B cell (primary cell): ENCODE measurements at regions of chr19 and their contacts with region 1.

Region 1: GRCh38 chr19:2962045-2962561 is 15.3 kb upstream of the TLE6 start:
- DNase-seq: peak; percentile 91
- ATAC-seq: peak; percentile 73
- H3K4me3 ChIP-seq: peak overlapping the region in 3 of 5 experiments; percentile 2 to 33 (median 9)
- H3K4me3 Mint-ChIP-seq: peak overlapping the region; percentile 2
- H3K27ac ChIP-seq: no peak overlapping the region
- H3K27ac Mint-ChIP-seq: peak overlapping the region; percentile 71
- H3K4me1 ChIP-seq: peaks cover 13 to 18% of the 10 kb centered on the region in 2 donors
- H3K4me1 Mint-ChIP-seq: peaks cover 14% of the 10 kb centered on the region
- H3K27me3 ChIP-seq: no peaks in the 10 kb centered on the region
- H3K27me3 Mint-ChIP-seq: no peaks in the 10 kb centered on the region
- CTCF ChIP-seq: peak; percentile 82

Region 2: DNA sequence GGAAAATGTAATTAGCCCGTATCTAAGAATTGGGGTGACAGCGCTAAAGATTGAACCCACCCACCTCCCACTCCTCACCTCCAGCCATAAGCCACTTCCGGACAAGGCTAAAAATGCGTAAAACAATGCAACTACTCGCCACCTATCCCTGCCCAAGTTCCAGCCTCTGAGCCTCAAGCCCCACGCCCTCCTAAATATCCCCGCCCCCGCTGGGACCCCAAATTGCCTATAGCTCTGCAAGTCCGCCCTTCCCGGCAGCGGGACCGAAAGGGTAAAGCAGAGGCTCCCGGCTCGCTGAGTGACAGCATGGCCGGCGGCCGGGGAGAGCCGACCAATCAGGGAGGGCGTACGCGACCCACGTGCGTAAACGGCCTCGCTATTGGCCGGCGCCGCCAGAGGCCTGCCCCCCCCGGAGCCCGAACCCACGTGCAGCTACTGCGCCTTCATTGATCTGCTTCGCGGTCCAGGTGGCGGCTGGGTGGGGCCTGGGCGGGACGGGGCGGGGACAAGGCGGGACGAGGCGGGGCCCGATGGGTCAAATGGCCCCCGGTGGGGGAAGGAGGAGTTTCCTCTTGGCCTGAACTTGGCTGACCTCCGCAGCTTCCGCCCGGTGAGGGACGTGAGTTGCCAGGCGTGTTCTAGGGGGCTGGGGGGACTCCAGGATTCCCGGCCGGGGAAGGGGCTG is 15.0 kb after region 1 on chr19 and contains the start of gene TLE6:
- CTCF ChIA-PET with region 1: interaction called, 9 read pairs
- POLR2A ChIA-PET with region 1: interaction called, 4 read pairs
- intact Hi-C with region 1: loop called (anchors 2 kb)
- DNase-seq: peak; percentile 96
- ATAC-seq: peak; percentile 99
- H3K4me3 ChIP-seq: peak within 1 kb of the TSS; percentile 55 to 77 (median 65)
- H3K4me3 Mint-ChIP-seq: peak within 1 kb of the TSS; percentile 96
- H3K27ac ChIP-seq: peak within 1 kb of the TSS in 1 of 2 donors; percentile 31
- H3K27ac Mint-ChIP-seq: peak within 1 kb of the TSS; percentile 72
- H3K4me1 ChIP-seq: peaks cover 14 to 27% of the 10 kb centered on the region in 2 donors
- H3K4me1 Mint-ChIP-seq: peaks cover 18% of the 10 kb centered on the region
- H3K27me3 ChIP-seq: peaks cover 0 to 5% (median 0%) of the 10 kb centered on the region in 4 experiments
- H3K27me3 Mint-ChIP-seq: no peaks in the 10 kb centered on the region
- CTCF ChIP-seq: no peak
- total RNA-seq, gene TLE6: 0.61 and 1.5 TPM in 2 replicates

Region 3: GRCh38 chr19:3102228-3103140 is 140.4 kb after region 1 on chr19:
- CTCF ChIA-PET with region 1: interaction called, 281 read pairs
- POLR2A ChIA-PET with region 1: interaction called, 5 read pairs
- intact Hi-C with region 1: loop called (anchors 1 kb)
- DNase-seq: no peak
- ATAC-seq: no peak
- H3K4me3 ChIP-seq: no peak overlapping the region
- H3K4me3 Mint-ChIP-seq: no peak overlapping the region
- H3K27ac ChIP-seq: no peak overlapping the region
- H3K27ac Mint-ChIP-seq: no peak overlapping the region
- H3K4me1 ChIP-seq: peaks cover 20 to 33% of the 10 kb centered on the region in 2 donors
- H3K4me1 Mint-ChIP-seq: peaks cover 20% of the 10 kb centered on the region
- H3K27me3 ChIP-seq: peaks cover 0 to 10% (median 2%) of the 10 kb centered on the region in 4 experiments
- H3K27me3 Mint-ChIP-seq: peaks cover 5% of the 10 kb centered on the region
- CTCF ChIP-seq: no peak